Lower leg skin (tissue), 4 donors: ENCODE measurements at regions of chr12 and their contacts with region 1.

Region 1: DNA sequence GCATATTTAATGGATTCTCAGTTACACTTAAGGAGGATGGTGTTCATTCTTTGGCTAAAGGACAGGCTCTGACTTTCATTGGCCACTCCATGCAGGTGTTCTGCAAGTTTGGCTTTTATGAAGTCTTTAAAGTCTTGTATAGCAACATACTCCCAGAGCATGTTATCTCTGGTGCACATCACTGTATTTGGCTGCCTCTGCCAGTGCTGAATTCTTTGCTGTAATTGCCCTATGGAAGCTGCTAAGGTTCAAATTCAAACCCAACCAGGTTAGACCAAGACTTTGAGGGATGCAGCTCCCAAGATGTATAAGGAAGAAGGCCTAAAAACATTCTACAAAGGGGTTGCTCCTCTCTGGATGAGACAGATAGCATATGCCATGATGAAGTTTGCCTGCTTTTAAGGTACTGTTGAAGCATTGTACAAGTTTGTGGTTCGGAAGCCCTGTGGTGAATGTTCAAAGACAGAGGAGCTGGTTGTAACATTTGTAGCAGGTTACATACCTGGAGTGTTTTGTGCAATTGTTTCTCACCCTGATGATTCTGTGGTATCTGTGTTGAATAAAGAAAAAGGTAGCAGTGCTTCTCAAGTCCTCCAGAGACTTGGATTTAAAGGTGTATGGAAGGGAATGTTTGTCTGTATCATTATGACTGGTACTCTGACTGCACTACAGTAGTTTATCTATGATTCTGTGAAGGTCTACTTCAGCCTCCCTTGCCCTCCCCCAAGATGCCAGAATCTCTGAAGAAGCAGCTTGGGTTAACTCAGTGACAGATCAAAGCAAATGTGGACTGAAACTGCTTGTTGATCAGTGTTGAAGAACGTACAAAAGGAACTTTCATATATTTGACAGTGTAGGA is 19.4 kb downstream of the TMEM116 start:
- DNase-seq: no peak
- H3K4me3 ChIP-seq: no peak overlapping the region
- CTCF ChIP-seq: no peak
- POLR2A ChIP-seq: no peak

Region 2: GRCh38 chr12:112031472-112031871 is 38.0 kb after region 1 on chr12:
- intact Hi-C with region 1: loop called (anchors 2 kb)
- DNase-seq: no peak
- H3K4me3 ChIP-seq: no peak overlapping the region
- CTCF ChIP-seq: no peak
- POLR2A ChIP-seq: no peak